ENCODE measurements at regions of chr5 and their contacts with region 1.

Region 1: DNA sequence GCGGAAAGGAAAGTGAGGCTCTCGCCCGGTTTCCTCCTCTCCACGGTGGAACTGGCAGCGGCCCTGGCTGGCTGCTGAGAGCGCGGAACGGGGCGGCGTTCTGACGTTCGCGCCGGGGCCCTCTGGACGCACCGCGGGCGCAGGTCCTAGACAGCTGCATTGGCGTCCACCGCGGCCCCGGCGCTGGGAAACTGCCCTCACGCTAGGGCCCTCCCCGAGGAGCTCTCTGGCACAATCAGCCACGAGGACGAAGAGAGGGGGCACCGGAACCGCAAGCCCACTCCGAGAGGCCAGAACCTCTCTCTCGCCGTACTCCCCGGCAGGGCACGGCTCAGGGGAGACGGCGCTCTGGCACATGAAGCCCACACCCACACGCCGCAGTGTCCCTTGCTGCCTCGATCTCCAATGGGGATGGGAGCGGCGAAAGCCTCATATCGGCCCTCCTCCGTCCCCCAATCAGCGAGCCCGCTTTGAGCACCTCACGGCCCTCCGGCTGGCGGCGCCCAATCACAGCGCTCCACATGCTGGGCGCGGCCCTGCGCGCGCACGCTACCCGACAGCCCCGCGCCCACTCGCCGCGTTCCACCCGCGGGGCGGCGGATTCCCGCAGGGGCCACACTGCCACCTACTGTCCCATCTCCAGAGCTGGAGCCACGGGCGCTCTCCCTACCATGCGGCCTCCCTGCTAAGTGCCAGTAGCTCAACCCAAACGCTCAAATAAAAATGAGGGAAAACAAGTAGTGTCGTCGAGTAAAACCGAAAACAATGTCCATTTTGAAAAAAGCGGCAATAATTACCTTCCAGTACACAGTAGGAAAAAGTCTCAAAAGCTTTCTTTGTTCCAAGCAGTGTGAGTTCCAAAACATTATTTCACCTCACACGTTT is 11.8 kb downstream of the MRPS27 start:
- DNase-seq: peak; percentile 98 to 99
- ATAC-seq: peak; percentile 100
- H3K4me3 ChIP-seq: peak overlapping the region; percentile 16 to 28
- H3K27ac ChIP-seq: peak overlapping the region; percentile 69 to 70
- H3K4me1 ChIP-seq: peaks cover 0 to 8% of the 10 kb centered on the region in 2 donors
- H3K27me3 ChIP-seq: no peaks in the 10 kb centered on the region

Region 2: GRCh38 chr5:71782771-71783770 is 525.1 kb before region 1 on chr5:
- intact Hi-C with region 1: loop called (anchors 2 to 5 kb)
- DNase-seq: peak; percentile 89 to 94
- ATAC-seq: peak; percentile 89
- H3K4me3 ChIP-seq: peak overlapping the region in 1 of 2 donors; percentile 80
- H3K27ac ChIP-seq: peak overlapping the region; percentile 91 to 97
- H3K4me1 ChIP-seq: peaks cover 3 to 9% of the 10 kb centered on the region in 2 donors
- H3K27me3 ChIP-seq: no peaks in the 10 kb centered on the region

Region 3: GRCh38 chr5:72108202-72109061 is 199.8 kb before region 1 on chr5:
- intact Hi-C with region 1: loop called in 1 of 2 experiments (anchors 5 kb)
- DNase-seq: peak; percentile 90 to 93
- ATAC-seq: peak; percentile 83
- H3K4me3 ChIP-seq: peak overlapping the region; percentile 88 to 96
- H3K27ac ChIP-seq: peak overlapping the region; percentile 93 to 96
- H3K4me1 ChIP-seq: peaks cover 0 to 2% of the 10 kb centered on the region in 2 donors
- H3K27me3 ChIP-seq: no peaks in the 10 kb centered on the region

Region 4: DNA sequence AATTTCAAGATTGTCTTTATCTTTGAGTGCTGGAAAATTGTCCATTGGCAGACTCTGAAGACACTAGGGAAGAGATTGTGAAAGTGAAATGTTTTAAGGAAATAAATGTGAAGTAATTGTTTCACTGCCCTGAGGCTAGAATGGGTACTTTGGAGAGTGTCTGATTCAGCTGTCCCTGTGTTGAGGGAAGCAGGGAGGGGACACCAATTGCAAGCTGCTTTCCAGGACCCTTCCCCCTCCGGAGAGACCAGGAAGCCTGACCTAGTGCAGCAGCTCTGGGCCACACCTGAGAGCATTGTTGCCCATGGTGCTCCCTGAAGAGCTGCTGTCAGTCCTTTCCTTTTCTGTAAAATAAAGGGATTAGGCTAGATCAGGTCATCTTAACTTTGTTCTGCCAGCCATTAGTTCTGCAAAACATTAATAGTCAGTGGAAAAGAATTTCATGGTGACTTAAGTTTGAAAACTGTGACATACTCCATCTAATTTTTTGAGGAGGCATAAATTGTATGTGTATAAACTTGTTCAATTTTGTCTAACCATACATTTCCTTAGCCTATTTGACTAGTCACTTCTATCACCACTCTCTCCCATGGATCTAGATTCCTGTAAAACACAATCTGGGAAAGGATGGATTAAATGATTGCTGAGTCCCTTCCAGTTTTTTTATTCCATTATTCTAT is 182.1 kb before region 1 on chr5:
- intact Hi-C with region 1: no loop called
- DNase-seq: no peak
- ATAC-seq: no peak
- H3K4me3 ChIP-seq: no peak overlapping the region
- H3K27ac ChIP-seq: peak overlapping the region; percentile 57 to 96
- H3K4me1 ChIP-seq: peaks cover 6 to 15% of the 10 kb centered on the region in 2 donors
- H3K27me3 ChIP-seq: no peaks in the 10 kb centered on the region

Region 5: GRCh38 chr5:72141440-72142355 is 166.5 kb before region 1 on chr5:
- intact Hi-C with region 1: loop called (anchors 5 kb)
- DNase-seq: peak in 1 of 2 donors; percentile 66
- ATAC-seq: peak; percentile 85
- H3K4me3 ChIP-seq: no peak overlapping the region
- H3K27ac ChIP-seq: peak overlapping the region; percentile 96 to 100
- H3K4me1 ChIP-seq: peaks cover 12 to 38% of the 10 kb centered on the region in 2 donors
- H3K27me3 ChIP-seq: no peaks in the 10 kb centered on the region

Region 6: GRCh38 chr5:72149742-72150141 is 158.5 kb before region 1 on chr5:
- intact Hi-C with region 1: loop called (anchors 5 kb)
- DNase-seq: no peak
- ATAC-seq: no peak
- H3K4me3 ChIP-seq: no peak overlapping the region
- H3K27ac ChIP-seq: peak overlapping the region; percentile 87 to 99
- H3K4me1 ChIP-seq: peaks cover 20 to 36% of the 10 kb centered on the region in 2 donors
- H3K27me3 ChIP-seq: no peaks in the 10 kb centered on the region

Region 7: GRCh38 chr5:72210888-72211678 is 97.1 kb before region 1 on chr5:
- intact Hi-C with region 1: loop called in 1 of 2 experiments (anchors 5 kb)
- DNase-seq: peak; percentile 70 to 82
- ATAC-seq: peak; percentile 81
- H3K4me3 ChIP-seq: no peak overlapping the region
- H3K27ac ChIP-seq: peak overlapping the region; percentile 14 to 97
- H3K4me1 ChIP-seq: peaks cover 3 to 7% of the 10 kb centered on the region in 2 donors
- H3K27me3 ChIP-seq: no peaks in the 10 kb centered on the region

Region 8: DNA sequence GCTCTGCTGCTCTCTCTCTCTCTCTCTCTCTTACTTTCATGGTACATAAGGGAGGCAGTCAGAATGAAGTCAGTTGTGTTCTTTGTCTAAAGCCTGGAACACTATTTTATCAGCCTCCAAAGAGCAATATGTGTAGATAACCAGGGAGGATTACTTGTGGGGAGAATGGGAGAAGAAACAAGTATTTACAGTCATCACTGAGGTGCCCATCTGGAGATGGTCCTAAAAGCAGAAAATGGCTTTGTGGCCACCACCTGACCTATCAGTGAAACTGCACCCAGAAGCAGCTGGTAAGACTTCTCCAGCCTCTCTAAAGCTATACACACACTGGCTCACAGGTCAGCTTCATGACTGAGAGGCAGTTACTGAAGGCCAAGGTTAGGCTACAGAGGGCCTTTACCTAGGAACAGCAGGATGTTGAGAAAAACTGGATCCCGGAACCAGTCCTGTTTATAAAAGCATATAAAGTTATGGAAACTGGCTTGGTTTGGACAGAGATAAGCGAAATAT is 63.3 kb before region 1 on chr5:
- intact Hi-C with region 1: loop called (anchors 5 kb)
- DNase-seq: no peak
- ATAC-seq: peak; percentile 58
- H3K4me3 ChIP-seq: no peak overlapping the region
- H3K27ac ChIP-seq: peak overlapping the region; percentile 95 to 98
- H3K4me1 ChIP-seq: peaks cover 9 to 19% of the 10 kb centered on the region in 2 donors
- H3K27me3 ChIP-seq: no peaks in the 10 kb centered on the region

Region 9: GRCh38 chr5:72268753-72269410 is 39.3 kb before region 1 on chr5:
- intact Hi-C with region 1: no loop called
- DNase-seq: peak in 1 of 2 donors; percentile 49
- ATAC-seq: no peak
- H3K4me3 ChIP-seq: no peak overlapping the region
- H3K27ac ChIP-seq: no peak overlapping the region
- H3K4me1 ChIP-seq: peaks cover 4 to 7% of the 10 kb centered on the region in 2 donors
- H3K27me3 ChIP-seq: no peaks in the 10 kb centered on the region

Region 10: DNA sequence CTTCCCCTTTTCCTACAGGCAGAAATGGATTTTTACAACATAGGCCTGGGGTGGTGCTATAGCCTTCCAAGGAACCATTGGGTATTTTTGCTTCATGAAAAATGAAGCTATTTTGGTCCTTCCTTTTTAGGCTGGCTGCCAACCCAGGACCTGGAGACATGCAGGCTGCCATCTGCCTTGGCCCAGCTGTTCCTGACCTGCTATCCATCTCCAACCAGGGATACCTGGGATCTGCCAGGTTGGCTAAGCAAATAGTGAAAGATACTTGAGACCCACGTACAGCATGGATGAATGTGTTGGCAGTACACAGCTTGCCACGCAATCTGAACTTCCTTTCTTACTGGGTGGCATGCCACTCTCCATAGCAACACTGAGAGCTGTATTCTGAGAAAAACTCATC is 19.3 kb before region 1 on chr5:
- intact Hi-C with region 1: no loop called
- DNase-seq: no peak
- ATAC-seq: no peak
- H3K4me3 ChIP-seq: no peak overlapping the region
- H3K27ac ChIP-seq: peak overlapping the region in 1 of 2 donors; percentile 37
- H3K4me1 ChIP-seq: peaks cover 0 to 4% of the 10 kb centered on the region in 2 donors
- H3K27me3 ChIP-seq: no peaks in the 10 kb centered on the region

Region 11: DNA sequence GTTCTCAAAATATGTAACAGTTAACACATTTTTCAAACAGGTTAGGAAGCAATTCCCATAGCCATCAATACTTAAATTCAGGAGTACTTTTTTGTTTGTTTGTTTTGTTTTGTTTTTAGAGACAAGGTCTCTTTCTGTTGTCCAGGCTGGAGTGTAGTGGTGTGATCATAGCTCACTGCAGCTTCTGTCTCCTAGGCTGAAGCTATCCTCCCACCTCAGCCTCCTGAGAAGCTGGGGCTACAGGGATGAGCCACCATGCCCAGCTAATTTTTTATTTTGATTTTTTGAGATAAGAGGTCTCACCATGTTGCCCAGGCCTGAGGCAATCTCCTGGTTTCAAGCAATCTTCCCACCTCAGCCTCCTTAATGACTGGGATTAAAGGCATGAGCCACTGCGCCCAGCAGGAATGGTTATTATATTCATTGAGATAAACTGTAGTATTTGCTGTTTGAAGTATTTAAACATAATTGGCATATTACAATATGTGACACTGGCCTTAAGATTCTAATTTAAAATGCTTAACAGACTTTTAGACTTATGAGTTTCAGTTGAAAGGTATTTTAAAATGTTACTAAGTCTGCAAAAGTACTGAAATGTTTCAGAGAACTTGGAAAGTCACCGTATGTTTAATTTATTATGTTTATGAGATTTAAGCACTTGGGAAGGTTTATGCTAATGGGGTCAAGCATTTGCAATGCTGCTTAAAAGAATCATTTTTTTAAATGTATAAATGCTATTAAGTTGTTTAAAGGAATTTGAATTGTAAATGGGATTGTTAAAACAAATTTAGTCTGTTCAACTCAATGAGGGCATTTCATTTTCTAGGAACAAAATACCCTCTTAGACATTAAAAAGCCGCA is 1274.3 kb after region 1 on chr5:
- intact Hi-C with region 1: no loop called
- DNase-seq: no peak
- ATAC-seq: no peak
- H3K4me3 ChIP-seq: no peak overlapping the region
- H3K27ac ChIP-seq: no peak overlapping the region
- H3K4me1 ChIP-seq: no peaks in the 10 kb centered on the region
- H3K27me3 ChIP-seq: no peaks in the 10 kb centered on the region